ENCODE measurements at regions of chr6 and their contacts with region 1.

Region 1: GRCh38 chr6:69796642-69797390 is at the start of gene LMBRD1:
- DNase-seq: peak; percentile 99
- ATAC-seq: peak; percentile 84
- H3K4me3 ChIP-seq: peak within 1 kb of the TSS; percentile 81 to 97 (median 85)
- H3K4me3 Mint-ChIP-seq: peak within 1 kb of the TSS; percentile 93
- H3K27ac ChIP-seq: peak within 1 kb of the TSS; percentile 90 to 99
- H3K27ac Mint-ChIP-seq: peak within 1 kb of the TSS; percentile 96
- H3K4me1 ChIP-seq: peaks cover 39 to 40% of the 10 kb centered on the region in 2 donors
- H3K4me1 Mint-ChIP-seq: peaks cover 46% of the 10 kb centered on the region
- H3K27me3 ChIP-seq: no peaks in the 10 kb centered on the region
- H3K27me3 Mint-ChIP-seq: no peaks in the 10 kb centered on the region
- CTCF ChIP-seq: peak; percentile 95
- total RNA-seq, gene LMBRD1: 94.0 and 99.0 TPM in 2 replicates

Region 2: GRCh38 chr6:67935976-67936477 is 1860.8 kb before region 1 on chr6:
- CTCF ChIA-PET with region 1: no interaction called
- POLR2A ChIA-PET with region 1: no interaction called
- intact Hi-C with region 1: no loop called
- DNase-seq: no peak
- ATAC-seq: no peak
- H3K4me3 ChIP-seq: no peak overlapping the region
- H3K4me3 Mint-ChIP-seq: no peak overlapping the region
- H3K27ac ChIP-seq: no peak overlapping the region
- H3K27ac Mint-ChIP-seq: no peak overlapping the region
- H3K4me1 ChIP-seq: no peaks in the 10 kb centered on the region
- H3K4me1 Mint-ChIP-seq: no peaks in the 10 kb centered on the region
- H3K27me3 ChIP-seq: no peaks in the 10 kb centered on the region
- H3K27me3 Mint-ChIP-seq: no peaks in the 10 kb centered on the region
- CTCF ChIP-seq: no peak

Region 3: GRCh38 chr6:69732640-69733039 is 64.2 kb before region 1 on chr6:
- CTCF ChIA-PET with region 1: interaction called, 3 read pairs
- POLR2A ChIA-PET with region 1: interaction called, 4 read pairs
- intact Hi-C with region 1: loop called (anchors 5 kb)
- DNase-seq: peak; percentile 44
- ATAC-seq: peak; percentile 45
- H3K4me3 ChIP-seq: no peak overlapping the region
- H3K4me3 Mint-ChIP-seq: no peak overlapping the region
- H3K27ac ChIP-seq: peak overlapping the region in 1 of 2 donors; percentile 34
- H3K27ac Mint-ChIP-seq: no peak overlapping the region
- H3K4me1 ChIP-seq: no peaks in the 10 kb centered on the region
- H3K4me1 Mint-ChIP-seq: peaks cover 16% of the 10 kb centered on the region
- H3K27me3 ChIP-seq: no peaks in the 10 kb centered on the region
- H3K27me3 Mint-ChIP-seq: no peaks in the 10 kb centered on the region
- CTCF ChIP-seq: peak; percentile 61

Region 4: DNA sequence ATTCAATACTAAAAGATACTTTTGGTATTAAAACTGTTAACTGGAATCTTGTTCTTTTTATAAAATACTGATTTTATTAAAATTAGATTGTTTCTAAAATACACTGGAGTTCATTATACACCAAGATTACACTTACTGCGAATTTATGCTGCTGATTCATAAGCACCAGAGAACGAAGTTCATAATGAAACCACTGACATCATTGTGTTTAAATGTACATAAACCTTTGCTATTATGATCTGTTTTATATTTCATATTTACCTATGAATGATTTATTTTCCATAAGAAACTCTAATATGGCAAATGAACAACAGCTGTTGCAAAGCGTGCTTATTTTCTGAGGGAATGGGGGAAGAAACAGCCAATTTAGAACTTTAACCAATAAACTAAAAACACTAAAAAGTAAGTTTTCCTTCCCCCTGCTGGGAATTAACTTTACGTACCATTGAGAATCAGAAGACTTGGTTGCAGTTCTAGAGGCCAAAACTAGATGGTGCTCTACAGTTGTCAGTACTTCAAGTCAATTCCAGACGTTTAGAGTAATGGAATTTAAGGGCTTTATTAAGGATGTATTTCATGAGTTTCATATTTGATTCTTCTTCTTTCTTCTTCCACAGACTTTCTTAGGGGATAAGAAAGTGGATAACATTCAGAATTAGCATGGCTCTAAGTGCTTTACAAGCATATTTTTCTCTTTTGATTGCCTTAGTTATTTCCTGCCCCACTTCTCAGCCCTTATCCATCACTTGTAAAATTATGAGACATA is 38.8 kb after region 1 on chr6:
- CTCF ChIA-PET with region 1: interaction called, 5 read pairs
- POLR2A ChIA-PET with region 1: interaction called, 3 read pairs
- intact Hi-C with region 1: loop called (anchors 1 kb)
- DNase-seq: peak; percentile 74
- ATAC-seq: peak; percentile 70
- H3K4me3 ChIP-seq: no peak overlapping the region
- H3K4me3 Mint-ChIP-seq: peak overlapping the region; percentile 40
- H3K27ac ChIP-seq: peak overlapping the region in 1 of 2 donors; percentile 53
- H3K27ac Mint-ChIP-seq: peak overlapping the region; percentile 12
- H3K4me1 ChIP-seq: peaks cover 15 to 21% of the 10 kb centered on the region in 2 donors
- H3K4me1 Mint-ChIP-seq: peaks cover 21% of the 10 kb centered on the region
- H3K27me3 ChIP-seq: no peaks in the 10 kb centered on the region
- H3K27me3 Mint-ChIP-seq: no peaks in the 10 kb centered on the region
- CTCF ChIP-seq: peak; percentile 96

Region 5: GRCh38 chr6:70107852-70108629 is 311.2 kb after region 1 on chr6:
- CTCF ChIA-PET with region 1: interaction called, 6 read pairs
- POLR2A ChIA-PET with region 1: interaction called, 3 read pairs
- intact Hi-C with region 1: loop called (anchors 1 kb)
- DNase-seq: peak; percentile 61
- ATAC-seq: peak; percentile 17
- H3K4me3 ChIP-seq: no peak overlapping the region
- H3K4me3 Mint-ChIP-seq: no peak overlapping the region
- H3K27ac ChIP-seq: no peak overlapping the region
- H3K27ac Mint-ChIP-seq: no peak overlapping the region
- H3K4me1 ChIP-seq: no peaks in the 10 kb centered on the region
- H3K4me1 Mint-ChIP-seq: peaks cover 11% of the 10 kb centered on the region
- H3K27me3 ChIP-seq: no peaks in the 10 kb centered on the region
- H3K27me3 Mint-ChIP-seq: no peaks in the 10 kb centered on the region
- CTCF ChIP-seq: peak; percentile 92

Region 6: DNA sequence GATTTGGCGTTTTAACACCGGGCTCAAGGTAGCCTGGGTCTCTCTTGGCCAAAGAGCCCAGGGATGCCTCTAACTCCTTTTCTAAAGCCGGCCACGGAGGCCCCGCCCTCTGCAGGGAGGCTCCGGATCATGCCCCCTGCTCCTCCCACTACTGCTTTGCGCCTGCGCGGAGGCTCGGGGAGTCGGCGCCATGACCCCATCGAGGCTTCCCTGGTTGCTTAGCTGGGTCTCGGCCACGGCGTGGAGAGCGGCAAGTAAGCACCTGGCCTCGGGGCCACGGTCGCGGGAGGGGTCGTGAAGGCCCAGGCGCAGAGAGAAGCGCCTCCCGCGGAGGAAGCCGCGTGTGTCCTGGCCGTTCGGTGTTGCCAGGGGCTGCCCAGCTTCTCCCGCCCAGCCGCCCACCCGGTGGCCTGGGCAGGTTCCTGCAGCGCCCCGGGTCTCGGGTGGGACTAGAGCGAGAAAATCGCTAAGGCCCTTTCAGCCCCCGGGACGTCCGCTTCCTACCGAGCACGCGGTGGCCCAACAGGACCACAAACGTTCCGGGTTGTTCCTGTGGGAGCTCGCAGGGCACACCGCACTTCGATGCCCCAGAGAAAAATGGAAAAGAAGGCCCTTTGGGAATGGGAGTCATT is 770.1 kb after region 1 on chr6 and contains the start of gene SDHAF4:
- CTCF ChIA-PET with region 1: no interaction called
- POLR2A ChIA-PET with region 1: no interaction called
- intact Hi-C with region 1: loop called (anchors 10 kb)
- DNase-seq: peak; percentile 94
- ATAC-seq: peak; percentile 99
- H3K4me3 ChIP-seq: peak within 1 kb of the TSS; percentile 72 to 91 (median 83)
- H3K4me3 Mint-ChIP-seq: peak within 1 kb of the TSS; percentile 93
- H3K27ac ChIP-seq: peak within 1 kb of the TSS; percentile 73 to 84
- H3K27ac Mint-ChIP-seq: peak within 1 kb of the TSS; percentile 83
- H3K4me1 ChIP-seq: peaks cover 5 to 12% of the 10 kb centered on the region in 2 donors
- H3K4me1 Mint-ChIP-seq: peaks cover 19% of the 10 kb centered on the region
- H3K27me3 ChIP-seq: no peaks in the 10 kb centered on the region
- H3K27me3 Mint-ChIP-seq: no peaks in the 10 kb centered on the region
- CTCF ChIP-seq: no peak
- total RNA-seq, gene SDHAF4: 9.1 and 15.4 TPM in 2 replicates